T-cell (primary cell): ENCODE measurements at regions of chr20 and their contacts with region 1.

Region 1: GRCh38 chr20:35387334-35387733 is 24.4 kb downstream of the UQCC1 start:
- DNase-seq: no peak
- ATAC-seq: no peak
- H3K4me3 ChIP-seq: no peak overlapping the region
- H3K4me3 Mint-ChIP-seq: no peak overlapping the region
- H3K27ac ChIP-seq: no peak overlapping the region
- H3K27ac Mint-ChIP-seq: no peak overlapping the region
- H3K4me1 ChIP-seq: no peaks in the 10 kb centered on the region
- H3K4me1 Mint-ChIP-seq: peaks cover 4 to 12% (median 8%) of the 10 kb centered on the region in 3 donors
- H3K27me3 ChIP-seq: no peaks in the 10 kb centered on the region
- H3K27me3 Mint-ChIP-seq: no peaks in the 10 kb centered on the region

Region 2: DNA sequence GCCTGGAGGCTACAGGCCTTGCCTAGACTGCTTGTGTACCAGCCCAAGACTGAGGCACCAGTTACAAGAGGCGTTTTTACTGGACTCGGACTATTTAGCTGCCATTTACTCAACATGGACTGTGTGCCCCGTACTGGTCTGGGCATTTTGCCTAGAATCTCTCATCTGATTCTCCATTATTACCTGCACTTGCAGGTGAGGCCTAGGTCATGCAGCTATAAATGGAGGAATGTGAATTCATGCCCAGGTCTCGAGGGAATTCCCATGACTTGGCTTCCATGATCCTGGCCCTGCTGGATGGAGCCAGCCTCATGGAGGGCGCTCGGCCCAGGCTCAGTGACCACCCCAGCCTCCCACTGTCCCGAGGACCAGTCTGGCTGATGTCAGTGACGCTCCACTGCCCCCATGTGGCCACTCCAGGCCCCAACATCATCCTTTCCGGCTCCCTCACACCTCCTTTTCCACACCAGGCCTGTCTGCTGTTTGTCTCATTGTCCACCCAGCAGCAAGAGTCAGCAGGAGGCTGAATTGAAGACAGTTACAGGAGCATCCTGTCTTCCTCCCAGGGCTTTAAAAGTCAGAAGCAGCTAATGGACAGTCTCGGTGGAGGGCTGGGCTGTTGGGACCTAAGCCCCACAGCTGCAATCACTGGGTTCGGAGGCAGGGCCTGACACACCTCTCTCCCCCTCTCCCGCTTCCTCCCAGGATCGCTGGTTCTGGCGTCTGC is 118.1 kb before region 1 on chr20:
- CTCF ChIA-PET with region 1: interaction called in 1 of 2 experiments, 13 read pairs
- POLR2A ChIA-PET with region 1: no interaction called
- DNase-seq: peak in 25 of 35 experiments; percentile 18 to 68 (median 35)
- ATAC-seq: peak; percentile 60 to 69 (median 63)
- H3K4me3 ChIP-seq: no peak overlapping the region
- H3K4me3 Mint-ChIP-seq: no peak overlapping the region
- H3K27ac ChIP-seq: no peak overlapping the region
- H3K27ac Mint-ChIP-seq: no peak overlapping the region
- H3K4me1 ChIP-seq: peaks cover 0 to 5% of the 10 kb centered on the region in 2 experiments
- H3K4me1 Mint-ChIP-seq: peaks cover 8 to 12% (median 12%) of the 10 kb centered on the region in 3 donors
- H3K27me3 ChIP-seq: no peaks in the 10 kb centered on the region
- H3K27me3 Mint-ChIP-seq: no peaks in the 10 kb centered on the region